OCI-LY7 (cell line): ENCODE measurements at regions of chr5 and their contacts with region 1.

Region 1: GRCh38 chr5:78359831-78360673 is at the start of gene SCAMP1:
- DNase-seq: peak; percentile 96
- H3K4me3 ChIP-seq: peak within 1 kb of the TSS; percentile 90
- H3K27ac ChIP-seq: peak within 1 kb of the TSS; percentile 85
- H3K4me1 ChIP-seq: peaks cover 22% of the 10 kb centered on the region
- CTCF ChIP-seq: no peak
- total RNA-seq, gene SCAMP1: 16.7 and 18.0 TPM in 2 replicates

Region 2: DNA sequence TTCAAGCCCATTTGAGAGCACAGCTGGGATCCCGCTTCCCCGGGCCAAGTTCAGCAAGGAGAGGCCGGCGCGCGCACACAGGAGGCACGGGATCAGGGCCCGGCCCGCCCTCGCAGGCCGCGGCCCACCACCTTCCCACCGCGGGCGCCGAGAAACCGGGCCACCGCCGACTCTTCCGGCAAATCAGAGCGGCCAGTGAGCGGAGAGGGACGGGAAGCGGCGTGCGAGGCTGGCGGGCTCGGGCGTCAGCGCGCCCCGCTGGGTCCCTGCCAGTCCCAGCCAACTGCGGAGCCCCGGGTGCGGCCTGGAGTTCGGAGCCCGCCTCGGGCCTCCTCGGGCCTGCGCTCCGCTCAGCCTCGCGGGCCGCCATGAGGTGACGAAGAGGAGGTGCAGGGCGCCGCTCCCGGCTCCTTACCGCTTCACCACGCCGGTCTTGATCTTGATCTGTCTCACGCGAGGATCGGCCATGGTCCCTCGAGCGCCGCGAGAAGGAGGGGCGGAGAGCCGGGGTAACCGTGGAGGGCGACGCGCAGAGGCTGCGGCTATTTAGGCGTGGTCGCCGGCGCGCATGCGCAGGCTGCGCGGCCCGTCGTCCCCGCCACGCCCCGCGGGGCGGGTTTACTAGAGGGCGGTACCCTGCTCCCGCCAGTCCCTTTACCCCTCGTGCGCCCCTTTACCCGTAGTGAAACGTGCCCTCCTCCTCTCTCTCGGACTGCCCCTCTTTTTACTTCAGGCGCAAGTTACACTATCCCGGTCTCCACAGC is 584.1 kb before region 1 on chr5 and contains the start of gene TBCA:
- CTCF ChIA-PET with region 1: no interaction called
- POLR2A ChIA-PET with region 1: no interaction called
- intact Hi-C with region 1: loop called (anchors 5 kb)
- DNase-seq: peak; percentile 94
- H3K4me3 ChIP-seq: peak within 1 kb of the TSS; percentile 77
- H3K27ac ChIP-seq: peak within 1 kb of the TSS; percentile 80
- H3K4me1 ChIP-seq: peaks cover 30% of the 10 kb centered on the region
- CTCF ChIP-seq: peak; percentile 47; the same call in 1 of the 2 replicates
- total RNA-seq, gene TBCA: 174 and 214 TPM in 2 replicates

Region 3: GRCh38 chr5:78109891-78110324 is 250.1 kb before region 1 on chr5:
- CTCF ChIA-PET with region 1: no interaction called
- POLR2A ChIA-PET with region 1: no interaction called
- intact Hi-C with region 1: loop called (anchors 5 kb)
- DNase-seq: peak; percentile 59
- H3K4me3 ChIP-seq: no peak overlapping the region
- H3K27ac ChIP-seq: peak overlapping the region; percentile 49
- H3K4me1 ChIP-seq: peaks cover 64% of the 10 kb centered on the region
- CTCF ChIP-seq: no peak

Region 4: GRCh38 chr5:78294248-78295034 is 65.6 kb before region 1 on chr5 and contains the start of gene AP3B1:
- CTCF ChIA-PET with region 1: no interaction called
- POLR2A ChIA-PET with region 1: interaction called, 5 read pairs
- intact Hi-C with region 1: loop called (anchors 1 kb)
- DNase-seq: peak; percentile 100
- H3K4me3 ChIP-seq: peak within 1 kb of the TSS; percentile 97
- H3K27ac ChIP-seq: peak within 1 kb of the TSS; percentile 55
- H3K4me1 ChIP-seq: peaks cover 33% of the 10 kb centered on the region
- CTCF ChIP-seq: no peak
- total RNA-seq, gene AP3B1: 25.7 and 32.5 TPM in 2 replicates

Region 5: DNA sequence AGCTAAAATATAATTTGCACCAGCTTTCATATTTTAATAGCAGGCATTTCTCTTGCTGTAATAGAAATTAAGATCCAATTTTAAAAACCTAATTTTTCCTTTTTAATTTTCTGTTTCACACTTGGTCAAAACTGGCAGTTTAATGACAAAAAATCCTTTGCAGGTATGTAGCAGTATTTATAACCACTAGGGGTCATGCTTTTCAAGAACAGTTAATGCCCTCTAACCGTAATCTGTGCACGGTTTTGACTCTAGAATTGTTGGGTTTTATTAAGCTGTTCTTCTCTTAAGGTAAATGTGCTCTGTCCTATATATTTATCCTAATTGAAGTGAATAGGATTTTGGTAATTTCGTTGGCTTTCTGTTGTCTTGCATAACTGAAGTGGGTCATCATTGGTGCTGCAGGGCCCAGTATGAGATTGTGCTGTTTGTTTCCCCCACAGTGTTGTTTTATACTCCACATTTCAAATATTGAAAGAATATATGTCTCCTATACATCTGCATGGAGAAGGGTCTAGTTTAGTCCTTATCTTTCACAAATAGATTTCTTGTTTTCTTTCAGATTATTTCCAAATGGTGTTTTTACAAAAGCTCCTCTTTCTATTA is 107.8 kb after region 1 on chr5:
- CTCF ChIA-PET with region 1: no interaction called
- POLR2A ChIA-PET with region 1: no interaction called
- intact Hi-C with region 1: loop called (anchors 5 kb)
- DNase-seq: peak; percentile 70
- H3K4me3 ChIP-seq: no peak overlapping the region
- H3K27ac ChIP-seq: no peak overlapping the region
- H3K4me1 ChIP-seq: no peaks in the 10 kb centered on the region
- CTCF ChIP-seq: peak; percentile 96

Region 6: GRCh38 chr5:78717674-78718625 is 357.9 kb after region 1 on chr5:
- CTCF ChIA-PET with region 1: no interaction called
- POLR2A ChIA-PET with region 1: interaction called, 3 read pairs
- intact Hi-C with region 1: loop called (anchors 5 kb)
- DNase-seq: peak; percentile 40
- H3K4me3 ChIP-seq: peak overlapping the region; percentile 71
- H3K27ac ChIP-seq: peak overlapping the region; percentile 99
- H3K4me1 ChIP-seq: peaks cover 71% of the 10 kb centered on the region
- CTCF ChIP-seq: no peak